ENCODE measurements at regions of chr12 and their contacts with region 1.

Region 1: GRCh38 chr12:42237052-42237852 is 796 bp downstream of the YAF2 start:
- DNase-seq: peak; percentile 82 to 84
- H3K4me3 ChIP-seq: peak overlapping the region; percentile 83
- H3K4me3 Mint-ChIP-seq: peak overlapping the region; percentile 75
- H3K27ac Mint-ChIP-seq: peak overlapping the region; percentile 33
- H3K4me1 ChIP-seq: peaks cover 9% of the 10 kb centered on the region
- H3K4me1 Mint-ChIP-seq: peaks cover 9% of the 10 kb centered on the region
- H3K27me3 ChIP-seq: no peaks in the 10 kb centered on the region
- H3K27me3 Mint-ChIP-seq: no peaks in the 10 kb centered on the region
- CTCF ChIP-seq: peak; percentile 9 to 33

Region 2: DNA sequence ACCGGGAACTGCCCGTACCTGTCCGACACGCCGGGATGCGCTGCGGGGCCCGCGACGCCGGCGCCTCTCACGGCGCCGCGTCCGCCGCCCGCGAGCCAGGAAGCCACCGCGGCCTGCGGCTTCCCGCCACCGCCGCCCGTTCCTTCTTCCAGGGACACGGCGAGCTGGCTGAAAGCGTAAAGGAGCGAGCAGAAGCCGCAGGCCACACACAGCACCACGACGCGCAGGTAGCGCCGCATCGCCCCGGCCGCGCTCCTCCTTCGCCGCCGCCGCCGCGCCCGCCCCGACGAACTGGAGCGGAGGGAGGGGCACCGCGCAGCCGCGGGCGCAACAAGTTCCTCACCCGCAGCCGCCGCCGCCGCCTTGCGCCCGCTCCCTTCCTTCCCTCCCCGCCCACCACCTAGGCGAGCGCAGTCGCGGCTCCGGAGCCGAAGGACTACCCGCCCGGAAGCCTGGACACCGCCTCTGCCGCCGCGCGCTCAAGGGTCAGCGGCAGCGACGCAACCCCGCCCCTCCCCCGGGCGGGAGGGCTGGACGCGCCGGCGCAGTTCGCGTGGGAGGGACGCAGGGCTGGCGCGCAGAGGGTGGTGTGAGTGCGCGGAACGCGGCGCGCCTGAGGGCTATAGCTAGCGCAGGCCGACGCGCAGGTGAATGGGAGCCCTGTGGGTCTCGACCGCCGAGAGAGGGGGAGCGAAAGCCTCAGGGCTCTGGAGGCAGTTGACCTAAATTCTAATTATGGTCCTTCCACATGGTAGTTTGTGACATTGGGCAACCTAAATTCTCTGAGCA is 92.7 kb before region 1 on chr12 and contains the start of gene GXYLT1:
- CTCF ChIA-PET with region 1: no interaction called
- POLR2A ChIA-PET with region 1: interaction called, 3 read pairs
- intact Hi-C with region 1: loop called (anchors 1 kb)
- DNase-seq: peak; percentile 97 to 98
- H3K4me3 ChIP-seq: peak within 1 kb of the TSS; percentile 69
- H3K4me3 Mint-ChIP-seq: peak within 1 kb of the TSS; percentile 82
- H3K27ac Mint-ChIP-seq: peak within 1 kb of the TSS; percentile 84
- H3K4me1 ChIP-seq: peaks cover 31% of the 10 kb centered on the region
- H3K4me1 Mint-ChIP-seq: peaks cover 35% of the 10 kb centered on the region
- H3K27me3 ChIP-seq: no peaks in the 10 kb centered on the region
- H3K27me3 Mint-ChIP-seq: no peaks in the 10 kb centered on the region
- CTCF ChIP-seq: no peak
- total RNA-seq, gene GXYLT1: 25.7 and 28.1 TPM in 2 replicates

Region 3: DNA sequence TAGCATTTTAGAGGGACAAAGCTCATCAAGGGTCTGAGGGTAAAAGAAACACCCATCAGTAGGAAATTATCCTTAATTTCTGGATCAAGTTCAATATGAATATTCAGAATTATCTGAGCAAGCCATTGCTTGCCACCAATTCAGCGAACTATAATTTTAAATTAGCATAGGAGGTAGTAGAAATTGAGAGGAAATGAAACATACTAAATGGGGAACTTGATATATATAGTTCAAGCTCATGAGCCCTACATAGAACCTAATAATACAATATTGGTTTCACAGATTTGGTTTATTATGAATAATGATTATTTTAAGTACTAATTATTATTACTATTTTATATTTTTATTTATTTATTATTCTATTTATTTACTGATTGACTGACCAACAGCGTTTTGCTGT is 50.5 kb before region 1 on chr12:
- CTCF ChIA-PET with region 1: no interaction called
- POLR2A ChIA-PET with region 1: no interaction called
- intact Hi-C with region 1: no loop called
- DNase-seq: no peak
- H3K4me3 ChIP-seq: no peak overlapping the region
- H3K4me3 Mint-ChIP-seq: no peak overlapping the region
- H3K27ac Mint-ChIP-seq: no peak overlapping the region
- H3K4me1 ChIP-seq: peaks cover 6% of the 10 kb centered on the region; the same call in 1 of the 2 replicates
- H3K4me1 Mint-ChIP-seq: peaks cover 9% of the 10 kb centered on the region
- H3K27me3 ChIP-seq: no peaks in the 10 kb centered on the region
- H3K27me3 Mint-ChIP-seq: no peaks in the 10 kb centered on the region
- CTCF ChIP-seq: no peak

Region 4: GRCh38 chr12:42325653-42326474 is 88.6 kb after region 1 on chr12 and contains the starts of genes PPHLN1 and ZCRB1:
- CTCF ChIA-PET with region 1: no interaction called
- POLR2A ChIA-PET with region 1: no interaction called
- intact Hi-C with region 1: loop called (anchors 2 kb)
- DNase-seq: peak; percentile 90 to 91
- H3K4me3 ChIP-seq: peak within 1 kb of the TSS; percentile 57
- H3K4me3 Mint-ChIP-seq: peak within 1 kb of the TSS; percentile 100
- H3K27ac Mint-ChIP-seq: peak within 1 kb of the TSS; percentile 100
- H3K4me1 ChIP-seq: peaks cover 18% of the 10 kb centered on the region
- H3K4me1 Mint-ChIP-seq: peaks cover 8% of the 10 kb centered on the region
- H3K27me3 ChIP-seq: no peaks in the 10 kb centered on the region
- H3K27me3 Mint-ChIP-seq: no peaks in the 10 kb centered on the region
- CTCF ChIP-seq: no peak
- total RNA-seq, gene PPHLN1: 83.7 and 87.6 TPM in 2 replicates
- total RNA-seq, gene ZCRB1: 46.6 and 52.1 TPM in 2 replicates

Region 5: GRCh38 chr12:42372154-42372791 is 135.0 kb after region 1 on chr12:
- CTCF ChIA-PET with region 1: interaction called, 4 read pairs
- POLR2A ChIA-PET with region 1: no interaction called
- intact Hi-C with region 1: loop called (anchors 2 kb)
- DNase-seq: peak in 1 of 2 experiments; percentile 70
- H3K4me3 ChIP-seq: no peak overlapping the region
- H3K4me3 Mint-ChIP-seq: no peak overlapping the region
- H3K27ac Mint-ChIP-seq: no peak overlapping the region
- H3K4me1 ChIP-seq: no peaks in the 10 kb centered on the region
- H3K4me1 Mint-ChIP-seq: peaks cover 16% of the 10 kb centered on the region
- H3K27me3 ChIP-seq: no peaks in the 10 kb centered on the region
- H3K27me3 Mint-ChIP-seq: no peaks in the 10 kb centered on the region
- CTCF ChIP-seq: peak; percentile 81 to 85